Common myeloid progenitor, CD34-positive (primary cell): ENCODE measurements at regions of chr5 and their contacts with region 1.

Region 1: DNA sequence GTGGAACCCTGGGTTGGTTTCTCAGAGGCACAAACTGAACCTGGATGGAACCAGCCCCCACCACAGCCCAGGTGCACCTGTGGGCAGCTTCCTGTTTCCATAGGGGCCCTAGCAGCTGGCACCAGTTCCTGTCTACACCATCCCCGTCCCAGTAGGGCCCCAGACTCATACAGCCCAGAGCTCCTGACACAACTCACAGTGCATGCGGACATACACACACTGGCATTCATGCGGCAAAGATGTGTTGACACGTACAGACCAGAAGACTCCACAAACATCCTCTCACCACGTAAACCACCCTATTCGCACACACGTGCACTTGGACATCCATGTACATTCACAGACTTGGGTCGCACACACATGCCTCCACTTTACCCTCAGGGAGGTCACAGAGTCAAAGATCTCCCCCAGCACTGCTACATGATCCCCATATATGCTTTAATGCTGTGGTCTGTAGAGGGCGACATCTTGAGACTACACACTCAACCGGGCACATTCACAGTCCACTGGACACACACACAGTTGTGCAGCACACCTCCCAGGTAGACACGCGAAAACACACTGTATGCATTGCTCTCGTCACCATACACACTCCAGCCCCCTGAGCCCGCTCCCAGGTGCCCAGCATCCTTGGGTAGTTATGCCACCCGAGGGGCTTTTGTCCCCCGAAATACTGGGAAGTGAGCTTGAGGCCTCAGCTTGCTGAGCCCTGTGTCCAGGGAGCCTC is 22.4 kb downstream of the CXXC5 start:
- DNase-seq: peak; percentile 78 to 98 (median 97)
- H3K4me3 ChIP-seq: peak overlapping the region in 6 of 7 experiments; percentile 20 to 78 (median 54)
- H3K27ac ChIP-seq: peak overlapping the region; percentile 48 to 86
- H3K4me1 ChIP-seq: peaks cover 21 to 96% (median 96%) of the 10 kb centered on the region in 4 experiments
- H3K27me3 ChIP-seq: no peaks in the 10 kb centered on the region

Region 2: GRCh38 chr5:139197710-139198669 is 472.5 kb before region 1 on chr5 and contains the start of gene SIL1:
- CTCF ChIA-PET with region 1: no interaction called
- POLR2A ChIA-PET with region 1: no interaction called
- DNase-seq: peak; percentile 95 to 96 (median 96)
- H3K4me3 ChIP-seq: peak within 1 kb of the TSS; percentile 50 to 93 (median 73)
- H3K27ac ChIP-seq: peak within 1 kb of the TSS; percentile 94 to 95
- H3K4me1 ChIP-seq: peaks cover 11 to 51% (median 40%) of the 10 kb centered on the region in 4 experiments
- H3K27me3 ChIP-seq: no peaks in the 10 kb centered on the region

Region 3: GRCh38 chr5:139651853-139652787 is 18.4 kb before region 1 on chr5:
- CTCF ChIA-PET with region 1: interaction called, 251 read pairs
- POLR2A ChIA-PET with region 1: interaction called, 34 read pairs
- DNase-seq: peak in 2 of 3 donors; percentile 72 to 78
- H3K4me3 ChIP-seq: peak overlapping the region in 6 of 7 experiments; percentile 27 to 95 (median 49)
- H3K27ac ChIP-seq: peak overlapping the region in 1 of 2 experiments; percentile 65
- H3K4me1 ChIP-seq: peaks cover 15 to 74% (median 71%) of the 10 kb centered on the region in 4 experiments
- H3K27me3 ChIP-seq: no peaks in the 10 kb centered on the region

Region 4: GRCh38 chr5:139684881-139685749 is 14.6 kb after region 1 on chr5:
- CTCF ChIA-PET with region 1: interaction called, 357 read pairs
- POLR2A ChIA-PET with region 1: interaction called, 11 read pairs
- DNase-seq: no peak
- H3K4me3 ChIP-seq: no peak overlapping the region
- H3K27ac ChIP-seq: no peak overlapping the region
- H3K4me1 ChIP-seq: peaks cover 2 to 77% (median 64%) of the 10 kb centered on the region in 4 experiments
- H3K27me3 ChIP-seq: no peaks in the 10 kb centered on the region

Region 5: GRCh38 chr5:139690064-139690802 is 19.7 kb after region 1 on chr5:
- CTCF ChIA-PET with region 1: interaction called, 357 read pairs
- POLR2A ChIA-PET with region 1: interaction called, 10 read pairs
- DNase-seq: peak in 2 of 3 donors; percentile 63 to 64
- H3K4me3 ChIP-seq: peak overlapping the region in 2 of 7 experiments; percentile 36 to 61
- H3K27ac ChIP-seq: peak overlapping the region in 1 of 2 experiments; percentile 32
- H3K4me1 ChIP-seq: peaks cover 0 to 79% (median 45%) of the 10 kb centered on the region in 4 experiments
- H3K27me3 ChIP-seq: no peaks in the 10 kb centered on the region

Region 6: DNA sequence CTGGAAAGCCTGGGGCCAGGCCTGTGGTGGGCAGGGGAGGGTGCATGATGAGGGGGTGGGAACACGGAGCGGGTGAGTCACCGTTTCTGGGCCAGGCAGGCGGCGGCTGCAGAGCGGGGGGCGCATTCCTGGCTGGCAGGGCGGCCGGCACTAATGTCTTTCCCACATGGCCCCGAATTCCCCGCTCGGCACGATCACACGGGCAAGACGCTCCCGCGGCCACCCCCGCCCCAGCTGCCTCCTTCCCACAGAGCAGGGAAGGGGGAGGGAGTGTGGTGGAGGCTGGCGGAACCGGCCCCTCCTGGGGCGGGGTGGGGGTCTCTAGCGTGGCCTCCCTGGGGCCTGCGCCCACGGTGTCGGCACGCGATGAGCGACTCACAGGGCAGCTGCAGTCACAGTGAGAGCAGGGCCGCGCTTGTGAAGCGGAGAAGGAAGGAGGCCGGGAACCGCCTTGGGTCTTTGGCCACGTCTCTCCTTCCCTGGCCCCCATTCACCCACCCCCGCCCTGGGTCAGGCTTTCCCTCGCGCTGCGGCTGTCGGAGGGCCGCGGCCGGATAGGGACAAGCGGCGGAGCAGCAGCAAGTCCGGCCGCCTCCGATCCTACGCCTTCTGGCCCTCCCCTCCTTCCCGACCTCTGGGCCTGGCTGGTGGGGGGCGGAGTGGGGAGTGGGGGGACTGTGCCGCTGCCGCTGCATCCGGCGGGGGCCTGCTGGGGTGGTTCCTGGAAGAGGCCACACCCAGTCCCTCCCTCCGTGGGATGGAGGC is 26.5 kb after region 1 on chr5:
- CTCF ChIA-PET with region 1: interaction called, 357 read pairs
- POLR2A ChIA-PET with region 1: interaction called, 3 read pairs
- DNase-seq: peak; percentile 50 to 85 (median 78)
- H3K4me3 ChIP-seq: peak overlapping the region; percentile 29 to 72 (median 59)
- H3K27ac ChIP-seq: peak overlapping the region; percentile 54 to 80
- H3K4me1 ChIP-seq: peaks cover 0 to 89% (median 55%) of the 10 kb centered on the region in 4 experiments
- H3K27me3 ChIP-seq: no peaks in the 10 kb centered on the region

Region 7: DNA sequence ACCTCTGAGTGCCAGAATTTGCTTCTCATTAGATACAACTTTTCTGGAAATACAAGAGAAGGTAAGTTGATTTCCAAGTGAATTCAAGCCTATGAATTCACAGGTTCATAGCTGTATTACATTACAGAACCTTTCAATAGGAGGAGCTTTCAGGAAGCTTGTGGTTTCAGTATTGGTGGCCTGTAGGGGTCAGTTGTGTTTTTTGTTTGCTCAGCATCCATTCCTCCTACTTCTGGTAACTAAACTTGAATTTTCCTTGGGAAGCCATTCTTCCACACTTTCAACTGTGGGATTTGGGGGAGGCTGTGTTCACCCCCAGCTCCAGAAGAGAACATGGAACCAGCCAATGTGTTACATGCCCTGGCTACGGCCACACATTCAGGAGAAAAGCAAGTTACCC is 498.9 kb after region 1 on chr5:
- CTCF ChIA-PET with region 1: no interaction called
- POLR2A ChIA-PET with region 1: no interaction called
- DNase-seq: no peak
- H3K4me3 ChIP-seq: no peak overlapping the region
- H3K27ac ChIP-seq: no peak overlapping the region
- H3K4me1 ChIP-seq: peaks cover 2 to 6% (median 3%) of the 10 kb centered on the region in 4 experiments
- H3K27me3 ChIP-seq: peaks cover 0 to 3% (median 0%) of the 10 kb centered on the region in 5 experiments